ENCODE measurements at regions of chr7 and their contacts with region 1.

Region 1: DNA sequence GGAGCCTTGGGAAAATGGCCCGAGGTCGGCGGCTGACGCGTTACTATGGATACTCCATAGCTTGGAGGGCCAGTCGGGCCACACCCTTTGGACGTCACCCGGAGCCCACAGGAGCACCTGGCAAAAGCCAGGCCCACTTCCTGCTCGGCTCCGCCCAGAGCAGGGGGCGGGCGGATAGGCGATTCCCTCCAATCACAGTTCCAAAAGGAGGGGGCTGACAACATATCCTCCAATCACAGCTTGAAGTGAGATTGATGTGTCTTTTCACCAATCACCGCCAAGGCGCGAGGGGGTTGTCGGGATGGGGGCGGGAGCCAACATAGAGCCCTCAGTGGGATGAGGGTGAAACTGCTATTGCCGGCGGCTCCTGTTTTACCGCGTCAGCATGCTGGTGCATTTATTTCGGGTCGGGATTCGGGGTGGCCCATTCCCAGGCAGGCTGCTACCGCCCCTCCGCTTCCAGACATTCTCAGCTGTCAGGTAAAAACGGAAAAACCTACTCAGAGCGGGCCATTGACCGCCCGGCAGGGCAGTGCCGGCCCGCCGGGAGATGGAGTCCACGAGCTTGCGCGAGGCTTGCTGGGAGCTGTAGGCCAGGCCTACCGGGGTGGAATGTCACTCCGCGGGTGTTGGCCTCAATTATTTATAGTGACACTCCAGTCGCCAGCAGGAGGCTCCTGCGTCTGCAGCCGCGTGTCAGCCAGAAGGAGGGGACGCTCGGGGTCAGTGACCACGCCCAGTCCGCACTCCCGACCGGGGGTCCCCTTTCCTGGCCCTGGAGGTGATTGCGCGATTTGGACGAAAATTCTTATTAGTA is at the start of gene ABCB8:
- DNase-seq: peak; percentile 99
- ATAC-seq: peak; percentile 97
- H3K4me3 Mint-ChIP-seq: peak within 1 kb of the TSS; percentile 88
- H3K27ac Mint-ChIP-seq: peak within 1 kb of the TSS; percentile 95
- H3K4me1 Mint-ChIP-seq: peaks cover 20% of the 10 kb centered on the region
- H3K27me3 Mint-ChIP-seq: no peaks in the 10 kb centered on the region
- total RNA-seq, gene ABCB8: 50.3 to 52.4 TPM

Region 2: DNA sequence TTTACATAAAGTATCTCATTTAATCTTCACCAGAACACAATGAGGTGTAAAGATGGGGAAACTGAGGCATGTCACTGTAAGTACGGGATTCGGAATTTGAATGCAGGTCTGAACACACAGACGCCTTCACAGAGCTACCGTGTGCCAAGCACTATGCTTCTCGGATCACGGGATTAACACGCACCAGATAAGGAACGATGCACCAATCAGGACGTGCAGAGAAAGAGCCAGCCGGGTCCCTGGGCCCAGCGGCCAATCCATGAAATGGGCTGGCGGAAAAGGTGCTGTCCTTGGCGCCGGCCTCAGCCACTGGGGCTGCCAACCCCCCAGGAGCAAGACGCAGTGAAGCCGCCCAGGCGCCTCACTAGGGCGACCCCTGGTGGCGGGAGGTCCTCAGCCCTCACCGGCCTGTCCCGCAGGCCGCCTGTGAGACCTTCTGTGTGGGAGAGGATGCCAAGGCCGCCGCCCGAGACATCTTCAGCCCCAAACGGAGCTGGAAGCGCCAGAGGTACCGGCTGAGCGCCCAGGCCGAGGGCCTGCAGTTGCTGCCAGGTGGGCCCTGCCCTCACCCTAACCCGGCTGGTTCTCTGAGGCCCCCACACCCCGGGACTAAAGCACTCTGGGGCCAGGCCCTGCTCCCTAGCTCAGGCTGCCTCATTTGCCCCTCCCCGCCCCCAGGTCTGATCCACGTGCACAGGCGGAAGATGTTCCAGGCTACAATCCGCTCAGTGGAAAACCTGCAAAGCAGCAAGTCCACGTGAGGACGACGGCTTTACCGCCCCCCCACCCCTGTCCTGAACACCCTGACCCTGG is 19.6 kb before region 1 on chr7:
- CTCF ChIA-PET with region 1: interaction called, 16 read pairs
- DNase-seq: peak; percentile 89
- ATAC-seq: peak; percentile 73
- H3K4me3 Mint-ChIP-seq: peak overlapping the region; percentile 81
- H3K27ac Mint-ChIP-seq: peak overlapping the region; percentile 90
- H3K4me1 Mint-ChIP-seq: peaks cover 48% of the 10 kb centered on the region
- H3K27me3 Mint-ChIP-seq: no peaks in the 10 kb centered on the region

Region 3: DNA sequence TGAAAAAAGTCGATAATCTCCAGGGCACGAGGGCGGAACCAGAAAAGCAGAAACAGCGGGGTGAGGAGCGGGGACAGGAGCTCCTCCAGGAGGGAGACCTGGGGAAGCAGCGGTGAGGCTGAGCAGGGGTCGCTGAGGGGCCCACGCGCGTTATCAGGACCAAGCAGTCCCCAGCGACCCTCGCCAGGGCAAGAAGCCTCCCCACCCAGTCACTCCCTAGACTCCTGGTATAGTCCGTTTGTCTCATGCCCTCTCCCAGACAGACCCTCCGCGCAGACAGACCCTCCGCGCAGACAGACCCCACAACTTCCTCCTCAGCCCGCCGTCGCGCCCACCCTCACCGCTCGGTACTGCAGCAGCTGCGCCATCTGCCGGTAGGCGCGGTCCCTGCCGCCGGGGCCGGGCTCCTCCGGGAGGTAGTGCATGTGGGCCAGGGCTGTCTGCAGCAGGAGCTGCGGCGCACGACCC is 10.4 kb before region 1 on chr7:
- CTCF ChIA-PET with region 1: interaction called, 66 read pairs
- DNase-seq: peak; percentile 84
- ATAC-seq: peak; percentile 64
- H3K4me3 Mint-ChIP-seq: peak overlapping the region; percentile 69
- H3K27ac Mint-ChIP-seq: peak overlapping the region; percentile 52
- H3K4me1 Mint-ChIP-seq: peaks cover 45% of the 10 kb centered on the region
- H3K27me3 Mint-ChIP-seq: peaks cover 39% of the 10 kb centered on the region

Region 4: GRCh38 chr7:151068068-151068773 is 39.9 kb after region 1 on chr7:
- CTCF ChIA-PET with region 1: no interaction called
- DNase-seq: no peak
- ATAC-seq: no peak
- H3K4me3 Mint-ChIP-seq: no peak overlapping the region
- H3K27ac Mint-ChIP-seq: no peak overlapping the region
- H3K4me1 Mint-ChIP-seq: no peaks in the 10 kb centered on the region
- H3K27me3 Mint-ChIP-seq: no peaks in the 10 kb centered on the region

Region 5: DNA sequence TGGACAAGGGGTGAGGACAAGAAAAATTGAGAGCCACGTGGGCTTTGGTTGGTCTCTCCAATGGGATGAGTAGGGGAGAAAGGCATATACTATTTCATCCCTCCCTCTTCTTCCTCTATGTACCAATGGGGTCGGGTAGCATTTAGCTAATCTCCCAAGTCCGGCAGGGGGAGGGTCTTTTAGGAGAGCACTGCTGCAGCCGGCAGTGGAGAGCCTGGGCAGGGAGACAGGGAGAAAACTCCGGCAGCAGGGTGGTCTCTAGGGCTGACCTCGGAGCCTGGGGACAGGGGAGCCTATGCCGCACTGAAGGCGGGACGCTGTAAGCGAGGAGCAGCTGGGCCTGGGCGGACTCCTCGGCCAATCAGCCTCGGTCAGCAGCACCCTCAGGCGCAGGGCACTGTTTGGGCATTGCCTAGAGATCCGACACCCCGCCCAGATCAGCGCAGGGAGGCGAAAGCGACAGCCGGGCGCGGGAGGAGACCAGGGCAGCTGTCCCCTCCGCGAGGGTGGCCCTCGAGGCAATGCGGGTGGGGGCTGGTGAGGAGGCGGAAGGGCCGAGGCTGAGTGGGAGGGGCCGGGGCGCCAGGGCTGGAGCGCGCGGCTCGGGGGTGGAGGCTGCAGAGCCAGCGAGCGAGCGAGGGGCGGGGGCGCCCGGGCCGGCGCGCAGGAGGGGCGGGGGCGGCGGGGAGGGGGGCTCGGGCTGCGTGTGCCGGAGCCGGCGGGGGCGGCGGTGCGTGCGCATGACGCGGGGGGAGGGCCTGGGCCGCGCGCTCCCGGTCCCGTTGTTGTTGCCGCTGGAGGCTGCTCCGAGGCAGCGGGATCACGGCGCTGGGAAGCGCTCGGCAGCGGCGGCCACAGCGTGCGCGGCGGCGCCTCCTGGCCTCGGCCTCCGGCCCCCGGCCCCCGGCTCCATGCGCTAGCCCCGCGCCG is 57.6 kb after region 1 on chr7 and contains the start of gene AGAP3:
- CTCF ChIA-PET with region 1: interaction called, 15 read pairs
- DNase-seq: peak; percentile 70
- ATAC-seq: peak; percentile 31
- H3K4me3 Mint-ChIP-seq: peak within 1 kb of the TSS; percentile 80
- H3K27ac Mint-ChIP-seq: peak within 1 kb of the TSS; percentile 79
- H3K4me1 Mint-ChIP-seq: peaks cover 37% of the 10 kb centered on the region
- H3K27me3 Mint-ChIP-seq: peaks cover 16% of the 10 kb centered on the region
- total RNA-seq, gene AGAP3: 30.0 to 36.2 TPM

Region 6: GRCh38 chr7:151110941-151111645 is 82.8 kb after region 1 on chr7:
- CTCF ChIA-PET with region 1: interaction called, 22 read pairs
- DNase-seq: peak; percentile 84
- ATAC-seq: peak; percentile 85
- H3K4me3 Mint-ChIP-seq: no peak overlapping the region
- H3K27ac Mint-ChIP-seq: no peak overlapping the region
- H3K4me1 Mint-ChIP-seq: peaks cover 2% of the 10 kb centered on the region
- H3K27me3 Mint-ChIP-seq: peaks cover 16% of the 10 kb centered on the region